Activated B cell treated with CpG ODN at 0.5 μM for 24 hours (primary cell): ENCODE measurements at regions of chr3 and their contacts with region 1.

Region 1: DNA sequence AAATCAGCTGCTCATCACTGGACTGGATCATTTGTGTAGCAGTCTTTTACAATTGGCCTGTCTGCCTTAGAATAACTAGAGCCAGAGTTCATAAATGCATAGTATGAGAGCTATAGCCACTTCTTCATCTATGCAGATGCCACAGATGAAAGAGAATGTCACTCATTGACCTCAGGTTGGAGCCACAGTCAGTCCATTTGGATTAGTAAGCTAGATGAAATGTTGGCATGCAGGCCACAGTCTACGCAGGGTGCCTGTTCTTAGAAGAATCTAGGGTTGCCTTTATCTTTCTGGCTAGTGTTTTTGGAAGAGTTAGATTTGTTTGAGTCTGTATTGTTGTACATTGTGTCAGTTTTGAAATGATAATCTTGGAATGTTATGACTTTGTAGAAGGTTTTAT is 25.4 kb upstream of the EDEM1 start:
- DNase-seq: no peak
- ATAC-seq: no peak
- H3K4me3 Mint-ChIP-seq: no peak overlapping the region
- H3K27ac Mint-ChIP-seq: no peak overlapping the region
- H3K4me1 Mint-ChIP-seq: peaks cover 76% of the 10 kb centered on the region
- H3K27me3 Mint-ChIP-seq: no peaks in the 10 kb centered on the region
- CTCF ChIP-seq: no peak

Region 2: GRCh38 chr3:5144316-5145011 is 17.6 kb before region 1 on chr3:
- CTCF ChIA-PET with region 1: interaction called, 3 read pairs
- POLR2A ChIA-PET with region 1: interaction called, 10 read pairs
- intact Hi-C with region 1: no loop called
- DNase-seq: no peak
- ATAC-seq: no peak
- H3K4me3 Mint-ChIP-seq: no peak overlapping the region
- H3K27ac Mint-ChIP-seq: no peak overlapping the region
- H3K4me1 Mint-ChIP-seq: peaks cover 75% of the 10 kb centered on the region
- H3K27me3 Mint-ChIP-seq: no peaks in the 10 kb centered on the region
- CTCF ChIP-seq: no peak

Region 3: GRCh38 chr3:5151586-5151985 is 10.5 kb before region 1 on chr3:
- CTCF ChIA-PET with region 1: no interaction called
- POLR2A ChIA-PET with region 1: interaction called, 10 read pairs
- intact Hi-C with region 1: loop called (anchors 2 kb)
- DNase-seq: no peak
- ATAC-seq: no peak
- H3K4me3 Mint-ChIP-seq: no peak overlapping the region
- H3K27ac Mint-ChIP-seq: no peak overlapping the region
- H3K4me1 Mint-ChIP-seq: peaks cover 72% of the 10 kb centered on the region
- H3K27me3 Mint-ChIP-seq: no peaks in the 10 kb centered on the region
- CTCF ChIP-seq: no peak